ENCODE measurements at regions of chr4 and their contacts with region 1.

Region 1: DNA sequence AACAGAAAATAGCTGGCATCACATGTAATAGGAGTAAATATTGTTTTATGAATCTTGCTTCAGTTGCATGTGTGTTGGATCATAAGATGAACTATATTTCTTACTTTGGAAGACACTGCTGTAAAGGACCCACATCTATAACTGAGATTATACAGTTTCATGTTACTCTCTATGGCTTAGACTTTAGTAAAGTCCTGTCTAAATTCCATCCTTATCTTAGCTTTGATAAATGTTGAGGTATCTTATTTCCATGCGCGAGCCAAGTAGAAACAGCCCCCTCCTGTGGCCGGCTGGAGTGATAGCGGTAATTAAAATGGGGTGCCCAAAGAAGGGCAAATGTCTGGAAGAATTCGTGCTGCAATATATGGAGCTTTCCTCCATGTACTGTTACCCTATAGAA is 43.0 kb downstream of the CCDC158 start:
- DNase-seq: peak in 1 of 2 experiments; percentile 63
- H3K4me3 ChIP-seq: no peak overlapping the region
- H3K27ac ChIP-seq: no peak overlapping the region
- H3K4me1 ChIP-seq: peaks cover 3 to 14% (median 8%) of the 10 kb centered on the region in 4 experiments
- H3K27me3 ChIP-seq: no peaks in the 10 kb centered on the region
- CTCF ChIP-seq: peak; percentile 69 to 72 (median 71)
- EP300 ChIP-seq: no peak
- POLR2A ChIP-seq: no peak
- RAD21 ChIP-seq: peak; percentile 79 to 85

Region 2: DNA sequence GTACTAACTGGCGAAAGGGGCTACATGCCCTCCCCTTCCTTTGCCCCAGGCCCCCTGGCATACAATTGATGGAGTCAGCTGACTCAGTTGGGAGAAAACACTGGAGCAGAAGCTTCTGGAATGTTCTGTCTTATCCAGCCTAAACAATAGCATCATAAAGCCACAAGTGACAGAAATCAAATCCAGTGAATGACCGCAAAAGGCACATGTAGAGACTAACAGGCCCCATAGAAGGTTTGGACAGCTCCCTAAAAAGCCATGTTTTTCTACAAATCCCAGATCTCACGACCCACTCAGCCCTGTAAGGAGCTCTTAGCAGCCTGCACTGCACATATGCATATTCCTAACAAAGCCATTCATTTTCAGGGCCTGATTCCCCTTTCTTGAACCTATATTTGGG is 189.4 kb before region 1 on chr4:
- CTCF ChIA-PET with region 1: interaction called, 153 read pairs
- POLR2A ChIA-PET with region 1: no interaction called
- DNase-seq: no peak
- H3K4me3 ChIP-seq: no peak overlapping the region
- H3K27ac ChIP-seq: no peak overlapping the region
- H3K4me1 ChIP-seq: no peaks in the 10 kb centered on the region
- H3K27me3 ChIP-seq: no peaks in the 10 kb centered on the region
- CTCF ChIP-seq: no peak
- EP300 ChIP-seq: no peak
- POLR2A ChIP-seq: no peak
- RAD21 ChIP-seq: no peak

Region 3: DNA sequence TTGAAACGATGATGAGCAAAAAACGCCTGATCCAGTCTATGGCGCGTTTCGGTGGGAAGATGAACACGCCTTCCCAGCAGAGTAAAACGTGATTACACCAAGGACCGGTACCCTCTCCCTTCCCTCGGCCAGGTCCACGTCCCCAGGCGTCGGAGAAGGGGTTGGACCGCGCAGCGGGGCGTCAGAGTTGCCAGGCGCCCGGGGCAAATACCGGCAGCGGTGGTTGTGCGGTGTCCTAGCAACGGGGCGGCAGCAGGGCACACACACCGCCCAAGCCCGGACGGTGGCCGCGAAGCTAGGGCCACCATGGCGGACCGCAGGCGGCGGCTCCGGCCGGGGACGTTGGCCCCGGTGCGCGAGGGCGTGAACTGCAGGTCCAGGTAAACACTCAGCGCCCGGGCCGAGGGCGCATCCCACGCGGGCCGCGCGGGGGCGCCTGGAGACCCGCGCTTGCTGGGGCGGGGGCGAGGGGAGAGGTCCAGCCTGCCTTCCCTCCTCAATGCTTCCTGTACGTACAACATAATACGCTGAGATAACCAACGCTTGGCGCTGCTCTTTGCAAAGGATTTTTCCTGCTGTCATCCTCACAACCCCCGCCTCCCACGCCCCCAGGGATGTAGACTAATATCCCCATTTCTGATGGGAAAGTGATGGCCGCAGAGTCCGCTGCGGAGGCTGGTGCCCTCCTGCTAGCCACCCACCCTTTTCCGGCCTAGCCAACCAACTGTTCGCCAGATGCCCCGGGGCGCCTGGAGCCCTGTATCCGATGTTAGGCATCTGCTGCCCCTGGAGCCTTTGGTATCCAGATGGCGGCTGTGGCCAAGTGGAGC is 126.3 kb before region 1 on chr4 and contains the start of gene FAM47E:
- CTCF ChIA-PET with region 1: interaction called, 44 read pairs
- POLR2A ChIA-PET with region 1: interaction called, 3 read pairs
- DNase-seq: peak; percentile 60 to 98
- H3K4me3 ChIP-seq: peak within 1 kb of the TSS; percentile 52 to 64 (median 53)
- H3K27ac ChIP-seq: no peak within 1 kb of the TSS
- H3K4me1 ChIP-seq: peaks cover 0 to 3% (median 3%) of the 10 kb centered on the region in 4 experiments; a peak in 6 of 7 replicates
- H3K27me3 ChIP-seq: peaks cover 0 to 6% (median 2%) of the 10 kb centered on the region in 4 experiments; a peak in 3 of 7 replicates
- CTCF ChIP-seq: peak; percentile 17 to 51 (median 33)
- EP300 ChIP-seq: peak; percentile 75 to 92; a peak in 2 of 3 replicates
- POLR2A ChIP-seq: peak in 1 of 2 experiments; percentile 65; a peak in 1 of 3 replicates
- RAD21 ChIP-seq: peak; percentile 45 to 57
- total RNA-seq, gene FAM47E: 1.3 and 1.7 TPM in 2 replicates

Region 4: GRCh38 chr4:76293772-76294171 is 84.1 kb before region 1 on chr4:
- CTCF ChIA-PET with region 1: interaction called, 24 read pairs
- POLR2A ChIA-PET with region 1: no interaction called
- DNase-seq: no peak
- H3K4me3 ChIP-seq: no peak overlapping the region
- H3K27ac ChIP-seq: no peak overlapping the region
- H3K4me1 ChIP-seq: no peaks in the 10 kb centered on the region
- H3K27me3 ChIP-seq: no peaks in the 10 kb centered on the region
- CTCF ChIP-seq: no peak
- EP300 ChIP-seq: no peak
- POLR2A ChIP-seq: no peak
- RAD21 ChIP-seq: no peak

Region 5: GRCh38 chr4:76363556-76364290 is 14.2 kb before region 1 on chr4:
- CTCF ChIA-PET with region 1: interaction called, 29 read pairs
- POLR2A ChIA-PET with region 1: no interaction called
- DNase-seq: no peak
- H3K4me3 ChIP-seq: no peak overlapping the region
- H3K27ac ChIP-seq: no peak overlapping the region
- H3K4me1 ChIP-seq: no peaks in the 10 kb centered on the region
- H3K27me3 ChIP-seq: no peaks in the 10 kb centered on the region
- CTCF ChIP-seq: no peak
- EP300 ChIP-seq: no peak
- POLR2A ChIP-seq: no peak
- RAD21 ChIP-seq: no peak

Region 6: DNA sequence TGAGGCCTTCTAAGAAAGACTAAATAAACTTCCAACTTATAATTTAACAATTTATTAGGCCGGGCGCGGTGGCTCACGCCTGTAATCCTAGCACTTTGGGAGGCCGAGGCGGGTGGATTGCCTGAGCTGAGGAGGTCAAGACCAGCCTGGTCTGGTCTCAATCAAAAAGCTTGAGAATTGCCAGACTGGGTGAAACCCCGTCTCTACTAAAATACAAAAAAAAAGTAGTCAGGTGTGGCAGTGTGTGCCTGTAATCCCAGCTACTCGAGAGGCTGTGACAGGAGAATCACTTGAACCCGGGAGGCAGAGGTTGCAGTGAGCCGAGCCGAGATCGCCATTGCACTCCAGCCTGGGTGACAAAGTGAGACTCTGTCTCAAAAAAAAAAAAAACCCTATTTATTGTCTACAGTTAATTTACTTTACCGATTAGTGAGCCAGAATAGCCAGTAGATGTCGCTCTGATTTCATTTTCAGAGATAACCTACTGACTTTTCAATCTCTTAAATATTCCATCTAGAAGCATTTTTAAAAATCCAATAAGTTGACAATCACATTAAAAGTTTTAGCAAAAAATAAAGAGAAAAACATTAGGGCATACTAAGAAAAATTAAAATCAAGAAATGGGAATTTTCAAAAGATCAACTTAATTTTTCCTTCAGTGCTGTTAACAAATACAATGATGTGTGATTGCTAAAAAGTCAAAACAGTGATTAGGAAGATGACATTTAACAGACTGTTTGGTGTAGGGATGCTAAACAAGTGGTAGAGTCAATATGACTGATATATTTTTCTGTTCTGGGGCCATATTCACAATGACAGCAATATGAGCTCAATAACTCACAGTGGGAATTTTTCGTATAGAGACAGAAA is 52.8 kb after region 1 on chr4:
- CTCF ChIA-PET with region 1: interaction called, 17 read pairs
- POLR2A ChIA-PET with region 1: no interaction called
- DNase-seq: no peak
- H3K4me3 ChIP-seq: no peak overlapping the region
- H3K27ac ChIP-seq: no peak overlapping the region
- H3K4me1 ChIP-seq: peaks cover 0 to 10% (median 8%) of the 10 kb centered on the region in 4 experiments; a peak in 4 of 7 replicates
- H3K27me3 ChIP-seq: no peaks in the 10 kb centered on the region
- CTCF ChIP-seq: peak in 2 of 3 experiments; percentile 43 to 45; a peak in 2 of 4 replicates
- EP300 ChIP-seq: no peak
- POLR2A ChIP-seq: no peak
- RAD21 ChIP-seq: peak; percentile 72 to 83

Region 7: DNA sequence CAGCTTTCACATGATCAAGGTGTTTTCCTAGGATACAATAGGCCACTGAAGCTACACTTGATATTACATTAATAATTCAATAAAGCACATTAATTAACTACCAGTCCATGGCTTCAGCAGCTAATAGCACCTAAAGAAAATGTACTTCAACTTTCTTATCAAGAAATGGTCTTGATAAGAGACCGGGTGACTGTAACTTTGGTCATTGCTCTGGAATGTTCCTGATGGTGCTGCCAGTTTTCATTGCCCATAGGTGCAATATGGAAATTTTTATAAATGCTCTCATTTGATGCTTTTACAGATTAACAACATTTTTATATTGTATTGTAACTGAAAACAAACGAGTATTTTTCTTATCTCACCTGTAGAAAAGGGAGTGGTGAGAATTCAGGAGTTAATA is 222.5 kb after region 1 on chr4:
- CTCF ChIA-PET with region 1: no interaction called
- POLR2A ChIA-PET with region 1: no interaction called
- DNase-seq: no peak
- H3K4me3 ChIP-seq: no peak overlapping the region
- H3K27ac ChIP-seq: no peak overlapping the region
- H3K4me1 ChIP-seq: peaks cover 0 to 6% (median under 1%) of the 10 kb centered on the region in 4 experiments; a peak in 2 of 7 replicates
- H3K27me3 ChIP-seq: no peaks in the 10 kb centered on the region
- CTCF ChIP-seq: no peak
- EP300 ChIP-seq: no peak
- POLR2A ChIP-seq: no peak
- RAD21 ChIP-seq: no peak

Measured in H1 (cell line).